Posterior vena cava (tissue), 2 donors: ENCODE measurements at regions of chr20 and their contacts with region 1.

Region 1: GRCh38 chr20:62418709-62419487 is 8.4 kb downstream of the RBBP8NL start:
- DNase-seq: no peak

Region 2: DNA sequence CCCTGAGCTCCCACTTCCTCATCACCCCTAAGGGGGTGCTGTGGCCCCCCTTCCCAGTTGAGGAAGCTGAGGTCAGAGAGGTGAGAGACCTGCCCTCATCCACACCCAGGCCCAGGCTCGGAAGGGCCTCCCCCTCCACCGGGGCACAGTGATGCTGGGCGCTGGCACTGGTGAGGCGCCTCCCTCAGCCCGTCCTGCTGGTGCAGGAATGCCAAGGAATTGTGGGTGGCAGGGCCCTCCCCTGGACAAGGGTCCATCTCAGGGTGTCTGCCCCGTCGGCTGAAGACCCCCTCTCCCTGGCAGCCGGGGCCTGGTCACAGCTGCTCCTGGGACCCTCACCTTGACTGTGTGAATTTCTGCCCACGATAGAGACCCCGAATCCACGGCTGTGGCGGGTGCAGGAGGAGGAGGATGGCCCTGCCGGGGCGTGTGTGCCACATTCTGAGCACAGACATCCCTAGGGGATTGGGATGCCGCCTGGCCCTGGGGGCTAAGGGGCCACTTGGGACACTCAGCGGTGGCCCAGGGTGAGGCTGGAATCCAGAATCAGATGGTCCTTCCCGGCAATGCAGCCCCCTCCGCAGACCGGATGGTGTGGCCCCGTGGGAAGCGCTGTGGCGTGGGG is 127.1 kb after region 1 on chr20:
- intact Hi-C with region 1: loop called in 1 of 2 experiments (anchors 1 kb)
- DNase-seq: no peak